ENCODE measurements at regions of chr17 and their contacts with region 1.

Region 1: DNA sequence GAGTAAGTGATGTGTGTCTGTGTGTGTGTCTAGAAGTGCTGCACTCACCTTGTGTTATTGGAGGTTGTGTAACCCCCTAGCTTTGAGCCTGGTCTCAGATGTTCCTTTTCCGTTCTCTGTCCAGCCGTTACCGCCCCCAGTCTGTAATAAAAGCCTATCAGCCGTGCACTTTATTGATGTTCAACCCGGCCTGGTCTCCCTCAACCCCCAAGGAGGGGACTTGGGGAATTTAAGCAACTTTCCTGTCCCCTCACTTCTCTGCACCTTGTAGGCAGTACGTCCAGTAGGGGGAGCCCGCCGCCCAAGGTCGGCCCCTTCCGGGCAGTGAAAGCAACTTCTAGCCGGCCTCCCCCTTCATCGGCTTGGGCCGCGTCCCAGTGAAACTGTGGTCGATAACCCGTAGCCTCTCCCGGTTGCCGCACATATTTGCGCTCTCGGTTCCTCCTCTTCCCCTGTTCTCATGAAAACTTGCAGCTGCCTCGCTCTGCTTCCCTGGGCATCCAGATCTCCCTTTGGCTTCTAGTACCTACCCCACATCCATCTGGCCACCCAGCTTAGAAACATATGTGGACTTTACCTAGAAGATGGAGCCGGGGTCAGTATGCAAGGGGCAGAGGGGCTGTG is 7.9 kb downstream of the PNPO start:
- DNase-seq: peak; percentile 53
- ATAC-seq: peak; percentile 92
- H3K4me3 ChIP-seq: peak overlapping the region; percentile 41; the same call in 1 of the 2 replicates
- H3K27ac ChIP-seq: peak overlapping the region; percentile 74
- H3K4me1 ChIP-seq: peaks cover 44% of the 10 kb centered on the region
- H3K27me3 ChIP-seq: no peaks in the 10 kb centered on the region
- CTCF ChIP-seq: peak; percentile 91 to 94 (median 94)
- EP300 ChIP-seq: peak in 1 of 2 experiments; percentile 45; a peak in 1 of 4 replicates
- POLR2A ChIP-seq: no peak
- RAD21 ChIP-seq: peak; percentile 86

Region 2: DNA sequence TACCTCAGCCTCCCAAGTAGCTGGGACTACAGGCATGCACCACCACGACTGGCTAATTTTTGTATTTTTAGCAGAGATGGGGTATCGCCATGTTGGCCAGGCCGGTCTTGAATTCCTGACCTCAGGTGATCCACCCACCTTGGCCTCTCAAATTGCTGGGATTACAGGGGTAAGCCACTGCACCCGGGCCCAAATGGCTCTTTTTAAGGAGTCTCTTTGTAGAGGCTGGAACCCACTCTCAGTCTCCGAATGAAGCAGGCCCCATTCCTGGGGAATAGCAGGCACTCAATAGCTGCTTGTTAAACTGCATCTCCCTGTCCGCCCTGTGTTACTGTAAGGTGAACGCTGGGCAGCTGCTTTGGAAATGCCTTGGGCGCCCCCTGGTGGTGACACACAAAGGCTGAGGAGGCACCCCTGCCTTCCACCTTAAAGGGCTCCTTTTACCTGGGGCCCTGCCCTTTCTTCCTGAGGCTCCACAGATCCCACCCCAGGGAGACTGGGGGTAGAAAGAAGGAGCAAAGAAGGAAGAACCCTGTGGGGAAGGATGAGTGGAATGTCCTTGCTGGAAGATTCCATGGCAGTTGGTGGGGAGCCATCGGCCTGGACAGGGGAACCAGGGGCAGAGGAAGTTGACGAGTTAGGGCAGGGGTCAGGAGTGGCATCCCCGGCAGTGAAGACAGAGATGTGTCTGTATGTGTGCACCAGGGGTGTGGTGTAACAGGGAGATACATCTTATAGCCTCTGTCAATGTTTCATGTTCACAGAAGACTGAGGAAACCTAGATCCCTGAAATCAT is 59.3 kb before region 1 on chr17:
- CTCF ChIA-PET with region 1: interaction called, 24 read pairs
- POLR2A ChIA-PET with region 1: interaction called, 18 read pairs
- RAD21 ChIA-PET with region 1: interaction called, 10 read pairs
- SMC1A ChIA-PET with region 1: interaction called, 19 read pairs
- in situ Hi-C with region 1: no loop called
- intact Hi-C with region 1: no loop called
- DNase-seq: no peak
- ATAC-seq: peak; percentile 99
- H3K4me3 ChIP-seq: no peak overlapping the region
- H3K27ac ChIP-seq: no peak overlapping the region
- H3K4me1 ChIP-seq: peaks cover 12% of the 10 kb centered on the region
- H3K27me3 ChIP-seq: no peaks in the 10 kb centered on the region
- CTCF ChIP-seq: peak; percentile 91 to 97 (median 96)
- EP300 ChIP-seq: no peak
- POLR2A ChIP-seq: no peak
- RAD21 ChIP-seq: peak; percentile 96

Region 3: GRCh38 chr17:47929218-47930000 is 19.8 kb before region 1 on chr17:
- CTCF ChIA-PET with region 1: interaction called, 15 read pairs
- POLR2A ChIA-PET with region 1: interaction called, 7 read pairs
- RAD21 ChIA-PET with region 1: no interaction called
- SMC1A ChIA-PET with region 1: interaction called, 3 read pairs
- in situ Hi-C with region 1: no loop called
- intact Hi-C with region 1: no loop called
- DNase-seq: no peak
- ATAC-seq: no peak
- H3K4me3 ChIP-seq: no peak overlapping the region
- H3K27ac ChIP-seq: no peak overlapping the region
- H3K4me1 ChIP-seq: no peaks in the 10 kb centered on the region
- H3K27me3 ChIP-seq: no peaks in the 10 kb centered on the region
- CTCF ChIP-seq: no peak
- EP300 ChIP-seq: no peak
- POLR2A ChIP-seq: no peak
- RAD21 ChIP-seq: no peak

Region 4: DNA sequence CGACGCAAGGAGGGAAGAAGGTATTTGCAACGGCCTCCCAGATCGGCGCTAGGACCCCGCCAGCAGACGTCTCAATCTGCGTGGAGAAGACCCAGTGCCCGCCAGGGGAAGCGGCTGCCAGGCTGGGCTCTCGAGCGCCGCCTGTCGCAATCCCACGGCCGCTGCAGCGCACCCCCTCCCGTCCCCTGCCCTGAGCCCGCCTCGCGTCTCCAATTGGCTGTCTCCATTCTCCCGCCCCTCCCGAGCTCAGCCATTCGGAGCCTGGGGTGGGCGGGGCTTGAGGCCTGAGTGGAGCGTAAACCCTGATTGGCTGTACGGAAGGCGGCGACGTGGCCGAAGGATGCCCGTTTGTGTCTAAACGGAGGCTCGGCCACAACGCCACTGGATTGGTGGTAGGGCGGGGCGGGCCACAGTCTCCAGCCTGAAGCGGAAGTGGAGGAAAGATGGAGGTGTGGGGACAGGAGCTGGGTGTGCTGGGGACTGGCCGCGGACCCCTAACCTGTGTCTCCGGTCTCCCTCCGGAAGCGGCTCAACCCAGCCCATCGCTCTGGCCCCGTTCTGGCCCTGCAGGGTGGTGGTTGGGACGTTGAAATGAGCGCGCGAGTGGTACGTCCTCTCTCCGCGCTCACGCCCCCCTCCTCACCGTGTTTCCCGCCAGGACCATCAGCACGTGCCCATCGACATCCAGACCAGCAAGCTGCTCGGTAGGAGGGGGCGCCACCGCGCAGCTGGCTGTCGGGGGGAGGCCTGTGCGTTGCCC is 21.6 kb after region 1 on chr17 and contains the start of gene CDK5RAP3:
- CTCF ChIA-PET with region 1: interaction called, 463 read pairs
- POLR2A ChIA-PET with region 1: interaction called, 39 read pairs
- RAD21 ChIA-PET with region 1: interaction called, 123 read pairs
- SMC1A ChIA-PET with region 1: interaction called, 139 read pairs
- in situ Hi-C with region 1: no loop called
- intact Hi-C with region 1: loop called (anchors 1 kb)
- DNase-seq: peak; percentile 97
- ATAC-seq: peak; percentile 98
- H3K4me3 ChIP-seq: peak within 1 kb of the TSS; percentile 92
- H3K27ac ChIP-seq: peak within 1 kb of the TSS; percentile 83
- H3K4me1 ChIP-seq: peaks cover 15% of the 10 kb centered on the region
- H3K27me3 ChIP-seq: no peaks in the 10 kb centered on the region
- CTCF ChIP-seq: peak; percentile 97 to 100 (median 99); a peak in 5 of 6 replicates
- EP300 ChIP-seq: no peak
- POLR2A ChIP-seq: peak; percentile 97
- RAD21 ChIP-seq: peak; percentile 45
- polyA plus RNA-seq, gene CDK5RAP3: 69.4 to 160 TPM

Region 5: GRCh38 chr17:48002266-48002915 is 53.1 kb after region 1 on chr17:
- CTCF ChIA-PET with region 1: interaction called, 59 read pairs
- POLR2A ChIA-PET with region 1: interaction called, 7 read pairs
- RAD21 ChIA-PET with region 1: interaction called, 4 read pairs
- SMC1A ChIA-PET with region 1: interaction called, 10 read pairs
- in situ Hi-C with region 1: no loop called
- intact Hi-C with region 1: no loop called
- DNase-seq: peak; percentile 75
- ATAC-seq: peak; percentile 85
- H3K4me3 ChIP-seq: no peak overlapping the region
- H3K27ac ChIP-seq: peak overlapping the region; percentile 85
- H3K4me1 ChIP-seq: peaks cover 49% of the 10 kb centered on the region
- H3K27me3 ChIP-seq: no peaks in the 10 kb centered on the region
- CTCF ChIP-seq: no peak
- EP300 ChIP-seq: peak; percentile 47 to 77; a peak in 2 of 4 replicates
- POLR2A ChIP-seq: no peak
- RAD21 ChIP-seq: no peak

Measured in GM12878 (cell line).